ENCODE measurements at regions of chr2 and their contacts with region 1.

Region 1: DNA sequence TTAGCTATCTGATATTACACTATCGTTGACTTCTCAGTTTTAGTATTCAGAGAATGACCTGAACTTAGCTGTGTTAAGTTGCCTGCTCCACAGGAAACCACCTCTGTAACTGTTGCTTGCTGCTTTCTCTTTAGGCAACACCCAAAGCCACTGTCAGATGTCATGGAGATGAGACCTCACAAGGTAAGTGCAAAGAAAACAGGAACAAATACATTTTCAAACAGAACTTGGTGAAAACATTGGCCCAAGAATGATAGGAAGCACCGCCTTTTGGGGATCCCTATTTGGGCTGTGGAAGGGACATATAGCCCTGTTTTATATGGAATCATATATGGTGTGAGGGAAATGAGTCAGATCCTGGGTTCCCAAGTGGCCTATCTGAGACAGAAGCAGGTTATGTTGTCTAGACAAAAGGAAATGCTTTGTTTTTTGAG is 143.4 kb downstream of the UBE2E3 start:
- DNase-seq: peak; percentile 61
- ATAC-seq: peak; percentile 95
- H3K4me3 Mint-ChIP-seq: peak overlapping the region; percentile 58
- H3K27ac Mint-ChIP-seq: peak overlapping the region; percentile 85
- H3K4me1 Mint-ChIP-seq: peaks cover 58% of the 10 kb centered on the region
- H3K27me3 Mint-ChIP-seq: no peaks in the 10 kb centered on the region

Region 2: GRCh38 chr2:181111059-181111458 is 12.8 kb before region 1 on chr2:
- CTCF ChIA-PET with region 1: interaction called, 19 read pairs
- POLR2A ChIA-PET with region 1: no interaction called
- intact Hi-C with region 1: loop called (anchors 1 kb)
- DNase-seq: no peak
- ATAC-seq: no peak
- H3K4me3 Mint-ChIP-seq: no peak overlapping the region
- H3K27ac Mint-ChIP-seq: no peak overlapping the region
- H3K4me1 Mint-ChIP-seq: peaks cover 35% of the 10 kb centered on the region
- H3K27me3 Mint-ChIP-seq: no peaks in the 10 kb centered on the region

Region 3: GRCh38 chr2:181140414-181140813 is 16.6 kb after region 1 on chr2:
- CTCF ChIA-PET with region 1: interaction called, 9 read pairs
- POLR2A ChIA-PET with region 1: no interaction called
- intact Hi-C with region 1: loop called in 1 of 2 experiments (anchors 2 kb)
- DNase-seq: no peak
- ATAC-seq: no peak
- H3K4me3 Mint-ChIP-seq: peak overlapping the region; percentile 64
- H3K27ac Mint-ChIP-seq: no peak overlapping the region
- H3K4me1 Mint-ChIP-seq: peaks cover 58% of the 10 kb centered on the region
- H3K27me3 Mint-ChIP-seq: no peaks in the 10 kb centered on the region

Region 4: DNA sequence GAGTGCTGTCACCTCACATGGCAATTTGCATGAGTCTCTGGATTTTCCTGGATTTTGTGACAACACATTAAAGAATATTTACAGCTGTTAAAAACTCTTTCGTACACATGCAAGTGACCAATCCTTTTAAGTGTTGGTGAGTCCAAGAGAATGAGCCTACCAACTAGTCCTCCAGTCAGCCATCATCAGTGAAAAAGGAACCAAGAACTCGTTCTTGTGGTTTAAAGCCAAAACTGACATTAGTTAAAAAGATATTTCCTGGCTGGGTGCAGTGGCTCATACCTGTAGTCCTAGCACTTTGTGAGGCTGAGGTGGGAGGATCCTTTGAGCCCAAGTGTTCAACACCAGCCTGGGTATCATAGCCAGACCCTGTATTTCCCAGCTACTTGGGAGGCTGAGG is 118.0 kb after region 1 on chr2:
- CTCF ChIA-PET with region 1: no interaction called
- POLR2A ChIA-PET with region 1: no interaction called
- intact Hi-C with region 1: no loop called
- DNase-seq: peak; percentile 21
- ATAC-seq: peak; percentile 72
- H3K4me3 Mint-ChIP-seq: no peak overlapping the region
- H3K27ac Mint-ChIP-seq: no peak overlapping the region
- H3K4me1 Mint-ChIP-seq: peaks cover 30% of the 10 kb centered on the region
- H3K27me3 Mint-ChIP-seq: no peaks in the 10 kb centered on the region

Measured in activated CD4-positive, alpha-beta T cell treated with anti-CD3 and anti-CD28 coated beads for 36 hours (primary cell).